OCI-LY7 (cell line): ENCODE measurements at regions of chr10 and their contacts with region 1.

Region 1: GRCh38 chr10:46006219-46006618 is 24.2 kb downstream of the NCOA4 start:
- DNase-seq: no peak
- H3K4me3 ChIP-seq: no peak overlapping the region
- H3K27ac ChIP-seq: no peak overlapping the region
- H3K4me1 ChIP-seq: no peaks in the 10 kb centered on the region
- CTCF ChIP-seq: no peak

Region 2: GRCh38 chr10:46022978-46023702 is 16.9 kb after region 1 on chr10:
- CTCF ChIA-PET with region 1: no interaction called
- POLR2A ChIA-PET with region 1: interaction called, 11 read pairs
- intact Hi-C with region 1: no loop called
- DNase-seq: peak; percentile 61
- H3K4me3 ChIP-seq: peak overlapping the region; percentile 51
- H3K27ac ChIP-seq: no peak overlapping the region
- H3K4me1 ChIP-seq: peaks cover 54% of the 10 kb centered on the region
- CTCF ChIP-seq: peak; percentile 33; the same call in 1 of the 2 replicates